Motor neuron (in vitro differentiated cells): ENCODE measurements at regions of chr1 and their contacts with region 1.

Region 1: DNA sequence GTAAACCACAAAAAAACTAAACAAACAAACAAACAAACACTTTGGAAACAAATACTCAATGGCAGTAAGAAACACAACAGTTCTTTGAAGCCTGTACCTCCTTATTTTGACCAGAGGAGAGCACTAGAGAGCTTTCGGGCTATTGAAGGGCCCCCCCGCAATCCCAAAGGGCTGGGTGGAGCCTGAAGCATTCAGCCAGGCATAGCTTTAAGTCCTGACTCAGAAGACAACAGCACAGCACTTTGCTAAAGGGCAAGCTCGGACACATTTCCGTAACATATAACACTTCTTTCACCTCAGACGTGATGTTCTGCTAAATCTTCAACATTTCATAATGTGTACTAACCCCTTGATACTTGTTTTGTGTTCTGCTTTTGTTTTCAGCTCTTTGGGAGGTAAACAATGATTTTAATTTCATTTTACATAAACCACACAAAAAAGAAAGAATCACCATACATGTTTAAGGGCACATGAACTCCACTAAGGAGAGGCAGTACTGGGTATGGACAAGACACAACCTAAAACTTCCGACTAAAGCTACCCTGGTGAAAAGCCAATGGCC is 9.7 kb upstream of the SHCBP1L start:
- ATAC-seq: peak; percentile 98 to 100 (median 100)
- H3K4me3 ChIP-seq: no peak overlapping the region
- H3K27ac ChIP-seq: no peak overlapping the region
- H3K4me1 ChIP-seq: peaks cover 0 to 5% of the 10 kb centered on the region in 2 donors

Region 2: GRCh38 chr1:183101841-183102276 is 139.2 kb after region 1 on chr1:
- in situ Hi-C with region 1: loop called in 1 of 9 experiments (anchors 25 kb)
- ATAC-seq: peak in 3 of 8 experiments; percentile 33 to 77 (median 64)
- H3K4me3 ChIP-seq: no peak overlapping the region
- H3K27ac ChIP-seq: no peak overlapping the region
- H3K4me1 ChIP-seq: no peaks in the 10 kb centered on the region

Region 3: DNA sequence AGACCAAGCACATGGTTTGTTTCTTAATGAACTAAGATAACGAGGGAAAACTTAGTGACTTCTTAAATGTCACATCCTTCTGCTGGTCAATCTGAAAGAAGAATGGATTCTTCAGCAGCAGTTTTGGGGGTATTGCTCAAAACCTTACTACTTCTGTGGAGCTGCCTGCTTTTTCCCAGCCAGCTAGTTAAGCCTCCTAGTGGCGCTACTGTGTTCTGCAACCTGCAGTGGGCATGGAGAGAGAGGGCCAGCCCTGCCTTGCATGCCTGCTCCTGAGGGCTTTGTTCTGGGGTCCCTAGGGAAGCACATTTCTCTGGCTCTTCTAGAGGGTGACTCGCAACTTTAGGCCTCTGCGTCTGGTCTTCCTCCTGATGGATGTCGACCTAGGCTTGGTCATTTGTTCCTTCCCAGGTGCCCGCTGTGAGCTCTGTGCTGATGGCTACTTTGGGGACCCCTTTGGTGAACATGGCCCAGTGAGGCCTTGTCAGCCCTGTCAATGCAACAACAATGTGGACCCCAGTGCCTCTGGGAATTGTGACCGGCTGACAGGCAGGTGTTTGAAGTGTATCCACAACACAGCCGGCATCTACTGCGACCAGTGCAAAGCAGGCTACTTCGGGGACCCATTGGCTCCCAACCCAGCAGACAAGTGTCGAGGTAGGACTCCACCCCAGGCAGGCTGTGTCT is 265.5 kb after region 1 on chr1:
- in situ Hi-C with region 1: loop called in 1 of 9 experiments (anchors 25 kb)
- ATAC-seq: peak in 5 of 8 experiments; percentile 45 to 82 (median 69)
- H3K4me3 ChIP-seq: no peak overlapping the region
- H3K27ac ChIP-seq: no peak overlapping the region
- H3K4me1 ChIP-seq: peaks cover 0 to 6% of the 10 kb centered on the region in 2 donors